Dorsolateral prefrontal cortex (tissue), 120 donors: ENCODE measurements at regions of chr13 and their contacts with region 1.

Region 1: GRCh38 chr13:95156208-95156607 is 145.0 kb downstream of the ABCC4 start:
- DNase-seq: no peak
- H3K4me3 ChIP-seq: no peak overlapping the region
- H3K27ac ChIP-seq: no peak overlapping the region
- H3K27me3 ChIP-seq: peaks cover 0 to 3% (median 0%) of the 10 kb centered on the region in 45 donors
- CTCF ChIP-seq: peak in 52 of 56 donors; percentile 20 to 68 (median 45)

Region 2: DNA sequence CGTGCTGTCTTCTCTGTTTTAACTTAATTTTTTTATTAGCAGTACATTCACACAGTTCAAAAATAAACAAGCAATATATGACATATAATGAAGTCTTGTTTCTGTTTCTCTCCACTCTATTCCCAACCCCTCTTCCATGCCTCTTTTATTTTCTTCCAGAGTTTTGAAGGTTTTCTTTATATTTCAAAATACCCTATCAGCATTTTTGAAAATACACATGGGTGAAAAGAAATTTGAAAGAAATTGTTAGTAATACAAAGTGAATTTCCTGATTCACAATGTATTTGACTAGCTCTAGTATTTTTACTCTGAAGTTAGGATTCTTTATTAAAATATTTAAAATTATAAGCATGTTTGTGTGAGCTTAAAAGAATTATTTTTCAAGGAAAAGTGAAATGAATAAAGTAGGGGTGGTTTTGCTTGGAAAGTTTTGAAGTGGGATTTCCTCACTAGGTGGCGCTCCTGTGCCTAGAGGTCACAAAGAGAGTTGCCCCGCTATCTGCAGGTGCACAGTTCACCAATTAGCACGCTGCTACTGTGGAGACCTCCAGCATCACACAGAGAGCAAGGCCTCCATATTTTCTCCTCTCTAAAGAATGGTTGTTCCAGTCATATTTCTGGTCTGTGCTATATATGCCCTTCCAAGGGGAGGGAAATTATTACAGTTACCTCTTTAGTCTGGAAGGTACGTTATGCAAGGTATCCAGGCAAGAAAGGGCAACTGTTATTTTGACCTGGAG is 481.4 kb before region 1 on chr13:
- intact Hi-C with region 1: loop called (anchors 10 kb)
- DNase-seq: peak in 4 of 10 donors; percentile 13 to 42 (median 32)
- H3K4me3 ChIP-seq: no peak overlapping the region
- H3K27ac ChIP-seq: no peak overlapping the region
- H3K27me3 ChIP-seq: peaks cover 0 to 11% (median 0%) of the 10 kb centered on the region in 45 donors
- CTCF ChIP-seq: peak in 55 of 56 donors; percentile 32 to 85 (median 67)

Region 3: DNA sequence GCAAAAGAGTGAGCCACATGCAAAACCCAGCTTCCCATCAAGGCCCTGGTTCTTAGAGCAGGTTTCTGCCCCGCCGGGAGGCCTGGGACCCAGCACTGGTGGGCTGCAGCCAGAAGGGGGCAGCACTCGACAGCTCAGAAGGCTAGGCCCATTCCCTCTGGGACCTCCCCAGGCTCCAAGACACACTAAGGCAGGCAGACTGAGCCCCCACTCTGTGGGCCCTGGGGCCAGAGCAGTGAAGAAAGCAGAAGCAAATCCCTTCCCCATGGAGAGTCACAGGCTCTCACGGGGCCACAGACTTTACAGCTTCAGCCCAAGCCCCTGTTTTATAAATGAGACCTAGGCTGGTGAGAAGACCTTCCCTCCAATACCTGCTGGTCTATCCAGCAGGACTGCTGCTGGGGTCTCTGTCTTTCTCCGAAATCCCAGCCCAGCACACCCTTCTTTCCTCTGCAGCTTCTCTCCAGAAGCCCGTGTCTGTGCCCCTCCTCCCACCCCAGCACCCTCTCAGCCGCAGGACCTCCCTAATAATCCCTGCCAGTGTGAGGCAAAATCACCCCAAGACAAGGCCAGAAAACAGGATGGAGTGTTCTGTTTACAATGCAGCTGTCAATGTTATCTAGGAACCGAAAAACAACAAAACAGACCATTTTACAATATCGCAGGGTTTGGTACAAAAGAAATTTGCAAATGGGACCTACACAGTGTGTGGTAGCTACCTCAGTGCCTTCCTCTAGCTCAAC is 35.8 kb after region 1 on chr13:
- intact Hi-C with region 1: no loop called
- DNase-seq: peak; percentile 18 to 78 (median 62)
- H3K4me3 ChIP-seq: no peak overlapping the region
- H3K27ac ChIP-seq: peak overlapping the region in 3 of 59 donors; percentile 4 to 40 (median 10)
- H3K27me3 ChIP-seq: no peaks in the 10 kb centered on the region
- CTCF ChIP-seq: peak in 55 of 56 donors; percentile 54 to 90 (median 76)